IMR-90 (cell line): ENCODE measurements at regions of chr12 and their contacts with region 1.

Region 1: GRCh38 chr12:11228296-11228879 is 41.1 kb downstream of the PRB3 start:
- DNase-seq: peak; percentile 30
- ATAC-seq: peak; percentile 96
- H3K4me3 ChIP-seq: no peak overlapping the region
- H3K27ac ChIP-seq: no peak overlapping the region
- H3K4me1 ChIP-seq: no peaks in the 10 kb centered on the region
- H3K27me3 ChIP-seq: peaks cover 2% of the 10 kb centered on the region; the same call in 1 of the 2 replicates
- CTCF ChIP-seq: peak; percentile 58
- POLR2A ChIP-seq: no peak
- RAD21 ChIP-seq: peak; percentile 57

Region 2: DNA sequence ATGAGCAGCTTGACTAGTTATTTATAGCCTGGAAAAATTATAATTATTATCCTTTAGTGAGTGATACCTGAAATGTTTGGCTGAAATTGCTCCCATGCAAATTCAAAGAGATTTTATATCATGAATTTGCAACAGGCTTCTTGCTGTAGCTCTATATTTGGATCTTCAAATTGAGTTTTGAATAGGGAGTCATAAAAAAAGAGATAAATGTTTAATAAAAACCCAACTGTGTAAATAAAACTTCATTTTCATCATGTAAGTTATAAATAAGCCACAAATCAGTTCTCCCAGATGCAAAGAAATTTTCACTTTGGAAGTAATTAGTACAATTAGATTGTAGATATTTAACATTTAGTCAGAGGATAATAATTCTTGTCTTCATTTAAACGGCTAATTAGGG is 421.2 kb before region 1 on chr12 and contains the start of gene TAS2R8:
- CTCF ChIA-PET with region 1: no interaction called
- POLR2A ChIA-PET with region 1: no interaction called
- dilution Hi-C with region 1: no loop called
- in situ Hi-C with region 1: no loop called
- intact Hi-C with region 1: no loop called
- DNase-seq: no peak
- ATAC-seq: no peak
- H3K4me3 ChIP-seq: no peak within 1 kb of the TSS
- H3K27ac ChIP-seq: no peak within 1 kb of the TSS
- H3K4me1 ChIP-seq: no peaks in the 10 kb centered on the region
- H3K27me3 ChIP-seq: no peaks in the 10 kb centered on the region; the same call in 1 of the 2 replicates
- CTCF ChIP-seq: no peak
- POLR2A ChIP-seq: no peak
- RAD21 ChIP-seq: no peak
- total RNA-seq, gene TAS2R8: not detected in 2 replicates

Region 3: GRCh38 chr12:11361151-11361550 is 132.8 kb after region 1 on chr12:
- CTCF ChIA-PET with region 1: no interaction called
- POLR2A ChIA-PET with region 1: no interaction called
- dilution Hi-C with region 1: no loop called
- in situ Hi-C with region 1: loop called (anchors 25 kb)
- intact Hi-C with region 1: no loop called
- DNase-seq: no peak
- ATAC-seq: no peak
- H3K4me3 ChIP-seq: no peak overlapping the region
- H3K27ac ChIP-seq: no peak overlapping the region
- H3K4me1 ChIP-seq: no peaks in the 10 kb centered on the region
- H3K27me3 ChIP-seq: no peaks in the 10 kb centered on the region
- CTCF ChIP-seq: no peak
- POLR2A ChIP-seq: no peak
- RAD21 ChIP-seq: no peak

Region 4: DNA sequence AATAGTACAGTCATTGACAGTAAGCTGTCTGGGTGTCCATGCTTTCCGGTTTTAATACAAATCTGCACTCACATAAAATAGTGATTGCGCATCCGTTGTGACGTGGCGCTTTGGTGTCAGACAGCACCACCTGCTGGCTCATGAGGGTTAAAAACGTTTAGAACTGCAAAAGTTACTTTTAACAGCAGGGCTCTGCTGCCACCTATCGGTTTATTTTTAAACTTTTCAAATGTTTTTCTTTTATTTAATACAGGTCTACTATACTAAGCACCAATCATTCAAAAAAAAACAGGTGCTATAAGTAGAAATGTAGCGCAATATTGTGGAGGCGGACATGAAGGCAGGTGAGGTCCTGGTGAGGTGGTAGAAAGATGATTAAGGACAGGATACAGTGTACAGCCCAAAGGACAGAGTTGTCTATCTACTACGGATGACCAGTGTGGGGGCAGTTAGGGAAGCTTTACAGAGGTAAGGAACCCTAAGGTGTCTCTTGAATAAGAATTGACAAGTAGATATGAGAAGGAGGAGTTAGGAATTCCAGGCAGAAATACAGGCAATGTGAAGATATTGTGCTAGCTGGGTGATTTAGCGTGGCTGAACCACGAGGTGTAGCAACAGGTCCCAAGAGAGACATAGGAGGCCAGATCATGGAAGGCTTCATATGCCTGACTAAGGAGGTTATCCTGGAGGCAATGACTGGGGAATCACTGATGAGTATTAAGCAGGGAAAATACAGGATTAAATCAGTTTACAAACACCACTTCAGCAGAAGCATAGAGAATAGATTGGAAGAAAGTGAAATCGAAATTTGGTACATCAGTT is 258.4 kb after region 1 on chr12:
- CTCF ChIA-PET with region 1: interaction called, 5 read pairs
- POLR2A ChIA-PET with region 1: no interaction called
- dilution Hi-C with region 1: no loop called
- in situ Hi-C with region 1: loop called (anchors 10 kb)
- intact Hi-C with region 1: loop called (anchors 1 kb)
- DNase-seq: peak; percentile 88
- ATAC-seq: peak; percentile 95
- H3K4me3 ChIP-seq: no peak overlapping the region
- H3K27ac ChIP-seq: no peak overlapping the region
- H3K4me1 ChIP-seq: no peaks in the 10 kb centered on the region
- H3K27me3 ChIP-seq: no peaks in the 10 kb centered on the region; the same call in 1 of the 2 replicates
- CTCF ChIP-seq: peak; percentile 100
- POLR2A ChIP-seq: no peak
- RAD21 ChIP-seq: peak; percentile 86

Region 5: DNA sequence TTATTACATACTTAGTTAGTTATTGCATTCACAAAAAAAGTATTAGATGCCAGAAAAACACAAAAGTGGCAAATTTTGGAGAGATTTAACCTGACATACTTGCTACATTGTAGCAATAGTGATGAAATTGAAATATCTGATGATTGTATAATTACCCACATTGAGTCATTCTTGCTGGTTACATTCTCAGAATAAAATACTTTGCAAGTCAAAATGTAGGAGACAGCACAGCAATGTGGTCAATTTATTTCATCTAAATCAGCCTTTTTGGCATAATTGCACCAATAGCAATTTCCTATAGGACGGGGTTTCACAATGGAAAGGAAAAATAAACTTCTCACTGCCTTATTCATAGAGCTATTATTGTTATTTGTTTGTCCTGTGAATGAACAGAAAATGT is 296.1 kb after region 1 on chr12:
- CTCF ChIA-PET with region 1: no interaction called
- POLR2A ChIA-PET with region 1: no interaction called
- dilution Hi-C with region 1: no loop called
- in situ Hi-C with region 1: no loop called
- intact Hi-C with region 1: no loop called
- DNase-seq: no peak
- ATAC-seq: no peak
- H3K4me3 ChIP-seq: no peak overlapping the region
- H3K27ac ChIP-seq: no peak overlapping the region
- H3K4me1 ChIP-seq: no peaks in the 10 kb centered on the region
- H3K27me3 ChIP-seq: no peaks in the 10 kb centered on the region
- CTCF ChIP-seq: no peak
- POLR2A ChIP-seq: no peak
- RAD21 ChIP-seq: no peak